Mammary epithelial cell (primary cell): ENCODE measurements at regions of chr11 and their contacts with region 1.

Region 1: GRCh38 chr11:568306-569157 is 7.7 kb upstream of the PHRF1 start:
- DNase-seq: peak; percentile 95
- H3K4me3 ChIP-seq: peak overlapping the region; percentile 74 to 96 (median 93)
- H3K27ac ChIP-seq: peak overlapping the region; percentile 63
- H3K4me1 ChIP-seq: peaks cover 29% of the 10 kb centered on the region
- H3K27me3 ChIP-seq: no peaks in the 10 kb centered on the region
- CTCF ChIP-seq: no peak

Region 2: GRCh38 chr11:344836-345578 is 223.5 kb before region 1 on chr11:
- CTCF ChIA-PET with region 1: interaction called, 13 read pairs
- dilution Hi-C with region 1: no loop called
- in situ Hi-C with region 1: no loop called
- intact Hi-C with region 1: no loop called
- DNase-seq: no peak
- H3K4me3 ChIP-seq: no peak overlapping the region
- H3K27ac ChIP-seq: no peak overlapping the region
- H3K4me1 ChIP-seq: no peaks in the 10 kb centered on the region
- H3K27me3 ChIP-seq: no peaks in the 10 kb centered on the region
- CTCF ChIP-seq: no peak

Region 3: GRCh38 chr11:615504-616319 is 47.2 kb after region 1 on chr11 and contains the start of gene IRF7:
- CTCF ChIA-PET with region 1: no interaction called
- dilution Hi-C with region 1: loop called (anchors 5 kb)
- in situ Hi-C with region 1: no loop called
- intact Hi-C with region 1: no loop called
- DNase-seq: peak; percentile 82
- H3K4me3 ChIP-seq: peak within 1 kb of the TSS; percentile 55 to 90 (median 60)
- H3K27ac ChIP-seq: peak within 1 kb of the TSS; percentile 71
- H3K4me1 ChIP-seq: peaks cover 22% of the 10 kb centered on the region
- H3K27me3 ChIP-seq: no peaks in the 10 kb centered on the region
- CTCF ChIP-seq: no peak
- total RNA-seq, gene IRF7: 1.0 to 4.4 TPM

Region 4: DNA sequence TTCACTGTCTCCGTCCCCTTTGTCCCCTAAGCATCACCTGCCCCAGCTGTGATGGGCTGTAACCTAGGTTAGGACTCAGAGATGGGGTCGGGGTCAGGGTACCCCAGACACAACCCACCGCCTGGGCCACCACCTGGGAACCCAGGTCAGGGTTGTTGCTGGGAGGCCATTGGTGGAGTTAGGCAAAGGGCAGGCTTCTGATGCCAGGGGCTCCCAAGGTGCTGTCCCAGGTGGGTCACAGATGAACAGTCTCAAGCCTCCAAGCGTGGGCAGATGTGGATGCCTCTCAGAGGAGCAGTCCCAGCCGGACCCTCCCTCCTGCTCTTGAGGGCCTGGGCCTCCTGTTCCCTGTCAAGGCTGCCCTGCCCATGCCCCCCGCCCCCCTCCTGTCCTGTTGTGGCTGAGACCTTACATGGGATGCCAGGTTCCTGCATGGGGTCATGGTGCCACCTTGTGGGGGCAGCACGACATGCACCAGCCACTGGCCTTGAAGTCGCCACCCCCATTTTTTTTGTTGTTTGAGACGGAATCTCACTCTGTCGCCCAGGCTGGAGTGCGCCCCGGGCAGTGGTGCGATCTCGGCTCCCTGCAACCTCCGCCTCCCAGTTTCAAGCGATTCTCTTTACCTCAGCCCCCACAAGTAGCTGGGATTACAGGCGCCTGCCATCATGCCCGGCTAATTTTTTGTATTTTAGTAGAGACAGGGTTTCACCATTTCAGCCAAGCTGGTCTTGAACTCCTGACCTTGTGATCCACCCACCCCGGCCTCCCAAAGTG is 196.7 kb after region 1 on chr11:
- CTCF ChIA-PET with region 1: no interaction called
- dilution Hi-C with region 1: no loop called
- in situ Hi-C with region 1: loop called in 1 of 2 experiments (anchors 25 kb)
- intact Hi-C with region 1: no loop called
- DNase-seq: peak; percentile 19
- H3K4me3 ChIP-seq: no peak overlapping the region
- H3K27ac ChIP-seq: no peak overlapping the region
- H3K4me1 ChIP-seq: peaks cover 20% of the 10 kb centered on the region
- H3K27me3 ChIP-seq: no peaks in the 10 kb centered on the region
- CTCF ChIP-seq: peak; percentile 36 to 62

Region 5: DNA sequence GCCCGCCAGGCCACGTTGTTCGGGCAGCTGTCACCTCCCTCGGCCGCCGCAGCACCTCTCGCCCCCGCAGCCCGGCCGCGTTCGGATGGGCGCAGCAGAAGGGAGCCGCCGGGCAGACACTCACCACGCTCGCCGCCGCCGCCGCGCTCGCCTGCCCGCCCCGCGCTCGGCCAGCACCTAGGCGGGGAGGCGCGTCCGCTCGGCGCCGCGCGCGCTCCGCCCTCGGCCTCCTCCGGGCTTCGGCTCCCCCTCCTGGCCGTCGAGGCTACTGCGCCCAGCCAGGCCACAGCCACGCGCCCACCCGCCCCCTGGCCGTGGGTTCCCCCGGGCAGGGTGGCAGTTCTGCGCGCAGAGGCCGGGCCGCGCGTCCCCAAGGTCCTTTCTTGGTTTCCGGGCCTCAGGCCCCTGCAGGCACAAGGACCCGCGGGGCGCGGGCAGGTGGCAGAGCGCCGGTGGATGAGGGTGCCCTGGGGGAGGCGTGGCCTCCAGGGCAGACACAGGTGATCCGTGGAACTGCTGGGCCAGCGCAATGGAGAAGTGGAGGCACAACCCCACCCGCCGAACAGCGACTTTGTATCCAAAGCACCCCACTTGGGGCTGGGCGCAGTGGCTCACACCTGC is 229.7 kb after region 1 on chr11 and contains the start of gene SLC25A22:
- CTCF ChIA-PET with region 1: no interaction called
- dilution Hi-C with region 1: no loop called
- in situ Hi-C with region 1: no loop called
- intact Hi-C with region 1: loop called (anchors 10 kb)
- DNase-seq: peak; percentile 80
- H3K4me3 ChIP-seq: peak within 1 kb of the TSS; percentile 55 to 93 (median 88)
- H3K27ac ChIP-seq: peak within 1 kb of the TSS; percentile 9
- H3K4me1 ChIP-seq: peaks cover 23% of the 10 kb centered on the region
- H3K27me3 ChIP-seq: no peaks in the 10 kb centered on the region
- CTCF ChIP-seq: peak; percentile 42 to 67
- total RNA-seq, gene SLC25A22: 7.3 to 29.5 TPM